Activated CD4-positive, alpha-beta T cell treated with anti-CD3 and anti-CD28 coated beads, Interleukin-2, amount 10 ng/mL, durations not matched to agents 24 days and 14 days (primary cell): ENCODE measurements at regions of chr3 and their contacts with region 1.

Region 1: DNA sequence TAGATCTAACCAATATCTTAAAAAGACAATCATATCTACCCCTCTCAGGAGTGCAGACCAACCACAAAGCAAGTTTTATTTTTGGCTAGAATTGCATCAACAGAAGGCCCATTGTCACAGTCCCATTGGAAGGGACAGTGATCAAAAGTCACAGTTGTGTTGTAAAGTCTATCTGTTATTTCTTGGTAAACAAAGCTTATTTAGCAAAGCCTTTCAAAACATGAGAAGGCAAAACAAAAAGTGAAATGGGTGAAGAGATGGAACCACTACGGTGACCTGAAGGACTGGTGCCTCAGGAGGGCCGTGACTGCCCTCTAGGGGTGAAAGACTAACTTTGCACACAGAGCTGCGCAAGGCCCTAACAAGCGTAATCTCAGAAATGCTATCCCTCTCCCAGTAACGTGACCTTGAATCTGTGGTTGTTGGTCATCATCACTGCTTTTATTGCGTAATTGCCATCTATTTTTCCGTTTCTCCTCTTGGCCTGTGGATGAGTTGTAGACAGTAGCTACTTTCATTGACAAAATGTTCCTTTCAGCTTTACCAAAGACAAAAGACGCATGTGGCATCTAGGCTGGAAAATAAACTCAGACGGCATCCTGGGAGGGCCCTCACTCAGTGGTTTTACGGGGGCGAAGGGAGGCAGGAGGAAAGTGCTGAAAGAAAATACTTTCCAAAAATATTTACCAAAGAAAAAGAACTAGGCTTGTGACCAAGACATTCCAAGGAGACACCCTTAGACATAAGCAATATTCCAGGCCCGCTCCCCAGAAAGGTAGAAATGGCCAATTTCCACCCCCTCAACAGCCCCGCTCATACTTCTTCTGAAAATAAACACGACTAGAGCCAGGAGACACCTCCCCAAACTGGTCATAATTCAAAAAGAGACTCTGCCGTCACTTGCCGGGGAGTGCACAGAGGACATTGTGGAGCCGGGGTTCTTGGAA is 79.4 kb downstream of the FRMD4B start:
- DNase-seq: peak; percentile 91
- H3K4me3 Mint-ChIP-seq: peak overlapping the region; percentile 62
- H3K27ac Mint-ChIP-seq: peak overlapping the region; percentile 66
- H3K4me1 Mint-ChIP-seq: peaks cover 19% of the 10 kb centered on the region
- H3K27me3 Mint-ChIP-seq: no peaks in the 10 kb centered on the region

Region 2: DNA sequence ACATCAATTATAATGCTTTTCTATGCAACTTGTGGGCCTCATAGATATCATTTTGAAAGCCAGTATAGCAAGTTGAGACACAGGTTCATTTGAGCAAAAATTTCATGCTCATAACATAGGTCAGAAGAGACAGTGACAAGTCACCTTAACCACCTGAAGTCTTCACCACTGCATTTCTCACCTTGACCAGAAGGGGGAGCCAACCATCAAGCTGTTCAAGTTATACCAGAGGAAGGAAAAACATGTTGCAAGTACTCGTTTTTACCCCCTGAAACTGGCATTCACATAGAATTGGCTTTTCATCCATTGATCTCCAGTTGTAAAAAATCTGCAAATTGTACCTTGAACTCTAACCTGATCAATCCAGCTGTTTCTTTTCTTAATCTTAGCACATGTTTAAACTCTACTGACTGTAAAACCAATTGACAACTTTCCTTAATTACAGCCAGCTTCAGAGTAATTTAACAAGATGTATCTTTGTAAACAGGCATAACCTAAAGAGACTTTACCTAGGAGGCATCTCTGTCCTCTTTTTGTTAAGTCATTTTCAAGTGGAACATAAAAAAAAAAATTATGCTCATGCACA is 185.5 kb before region 1 on chr3:
- intact Hi-C with region 1: loop called (anchors 1 kb)
- DNase-seq: peak; percentile 94
- H3K4me3 Mint-ChIP-seq: no peak overlapping the region
- H3K27ac Mint-ChIP-seq: no peak overlapping the region
- H3K4me1 Mint-ChIP-seq: peaks cover 4% of the 10 kb centered on the region
- H3K27me3 Mint-ChIP-seq: peaks cover 5% of the 10 kb centered on the region

Region 3: DNA sequence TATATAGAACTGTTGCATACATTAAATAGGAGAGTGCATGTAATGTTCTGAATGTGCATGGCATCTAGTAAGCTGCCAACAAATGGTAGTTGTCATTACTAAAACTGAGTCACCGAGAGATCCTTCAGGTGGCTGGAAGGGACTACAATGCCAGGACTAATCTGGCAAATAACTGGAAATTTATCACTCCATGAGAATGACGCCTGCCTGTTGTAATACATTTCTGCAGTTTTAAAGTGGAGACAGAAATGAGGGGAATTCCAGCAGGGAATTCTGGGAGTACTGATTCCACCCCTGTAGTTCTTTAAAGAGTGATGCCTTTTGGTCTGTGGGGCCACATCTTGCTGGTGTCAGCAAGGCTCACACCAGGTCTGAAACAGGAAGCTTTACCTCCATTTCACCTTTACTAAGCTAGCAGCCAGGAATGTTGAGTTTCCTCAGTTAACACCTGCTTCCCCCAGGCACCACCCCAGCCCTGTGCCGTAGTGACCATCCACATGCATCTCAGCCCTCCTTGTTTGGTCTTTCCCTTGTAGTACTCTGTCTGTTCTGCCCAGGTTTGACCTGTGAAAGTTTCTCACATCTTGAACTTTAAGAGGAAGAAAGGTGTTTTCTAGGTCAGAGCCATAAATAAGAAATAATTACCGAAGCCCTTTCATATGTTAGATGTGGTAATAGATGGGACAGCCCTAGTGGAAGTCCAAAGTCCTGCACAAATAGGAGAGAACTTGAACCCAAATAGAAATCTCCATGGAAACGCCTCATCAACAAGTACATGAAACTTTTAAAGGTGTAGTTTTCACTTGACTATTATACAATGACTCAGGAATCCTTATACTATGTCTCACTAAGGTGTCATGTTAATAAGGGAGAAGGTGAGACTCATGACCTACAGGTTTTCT is 127.4 kb before region 1 on chr3:
- intact Hi-C with region 1: loop called (anchors 5 kb)
- DNase-seq: no peak
- H3K4me3 Mint-ChIP-seq: no peak overlapping the region
- H3K27ac Mint-ChIP-seq: peak overlapping the region; percentile 47
- H3K4me1 Mint-ChIP-seq: peaks cover 21% of the 10 kb centered on the region
- H3K27me3 Mint-ChIP-seq: no peaks in the 10 kb centered on the region

Region 4: GRCh38 chr3:69212411-69213139 is 93.9 kb before region 1 on chr3:
- intact Hi-C with region 1: loop called (anchors 1 kb)
- DNase-seq: peak; percentile 71
- H3K4me3 Mint-ChIP-seq: peak overlapping the region; percentile 62
- H3K27ac Mint-ChIP-seq: peak overlapping the region; percentile 90
- H3K4me1 Mint-ChIP-seq: peaks cover 50% of the 10 kb centered on the region
- H3K27me3 Mint-ChIP-seq: no peaks in the 10 kb centered on the region

Region 5: DNA sequence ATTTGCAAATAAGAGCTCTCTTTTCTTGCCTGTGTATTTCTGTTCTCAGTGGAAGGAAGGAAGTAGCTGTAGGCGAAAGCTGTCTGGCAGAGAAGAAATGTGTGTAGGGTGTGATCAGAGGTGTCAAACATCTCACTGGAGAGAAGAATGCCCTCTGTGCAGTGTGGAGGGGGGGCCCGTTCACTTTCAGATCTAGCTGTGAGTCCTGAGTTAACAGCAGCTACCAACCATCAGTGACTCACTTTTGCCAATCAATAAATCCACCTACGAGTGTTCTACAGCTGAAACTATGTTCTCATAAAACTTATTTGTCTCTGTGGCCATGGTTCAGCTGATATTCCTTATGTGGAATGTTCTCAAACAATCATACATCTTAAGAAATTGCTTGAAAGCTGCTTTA is 24.3 kb before region 1 on chr3:
- intact Hi-C with region 1: loop called (anchors 1 kb)
- DNase-seq: peak; percentile 69
- H3K4me3 Mint-ChIP-seq: peak overlapping the region; percentile 50
- H3K27ac Mint-ChIP-seq: peak overlapping the region; percentile 87
- H3K4me1 Mint-ChIP-seq: peaks cover 18% of the 10 kb centered on the region
- H3K27me3 Mint-ChIP-seq: peaks cover under 1% of the 10 kb centered on the region

Region 6: DNA sequence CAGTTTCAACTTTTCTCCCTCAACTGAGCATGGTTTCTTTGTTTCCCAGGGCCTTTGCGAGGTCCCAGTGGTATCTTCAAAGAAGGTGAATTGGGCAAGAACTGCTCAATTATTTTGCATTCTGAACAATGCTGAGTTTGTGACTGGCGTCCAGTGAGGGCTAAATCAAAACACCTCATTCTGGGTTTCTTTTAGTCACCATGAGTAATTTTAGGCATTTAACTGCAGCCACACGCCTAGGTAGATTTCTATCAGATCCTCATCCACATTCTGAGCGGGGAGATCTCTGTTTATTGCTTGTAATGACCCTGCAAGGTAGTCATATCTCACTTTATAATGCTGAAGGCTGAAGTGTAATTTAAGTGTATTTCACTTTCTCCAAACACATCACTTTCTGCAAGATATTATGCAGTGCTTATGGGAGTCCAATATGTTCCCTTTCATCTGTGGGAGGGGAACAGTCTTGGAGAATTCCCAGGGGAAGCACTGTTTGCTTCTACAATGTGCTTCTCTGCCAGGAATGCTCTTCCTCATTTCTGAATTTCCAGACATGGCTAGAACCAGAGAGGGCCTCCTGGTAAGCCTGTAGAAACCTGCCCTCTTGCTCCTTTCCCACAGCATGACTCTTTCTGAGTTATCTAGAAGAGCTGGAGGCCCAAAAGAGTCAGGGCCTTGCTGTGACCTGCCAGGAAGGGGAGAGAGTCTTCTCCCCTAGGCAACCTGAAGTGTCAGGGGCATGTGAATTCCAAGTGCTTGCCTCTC is 12.3 kb before region 1 on chr3:
- intact Hi-C with region 1: loop called (anchors 1 kb)
- DNase-seq: no peak
- H3K4me3 Mint-ChIP-seq: no peak overlapping the region
- H3K27ac Mint-ChIP-seq: no peak overlapping the region
- H3K4me1 Mint-ChIP-seq: peaks cover 5% of the 10 kb centered on the region
- H3K27me3 Mint-ChIP-seq: no peaks in the 10 kb centered on the region

Region 7: GRCh38 chr3:69320871-69321271 is 14.4 kb after region 1 on chr3:
- intact Hi-C with region 1: no loop called
- DNase-seq: no peak
- H3K4me3 Mint-ChIP-seq: no peak overlapping the region
- H3K27ac Mint-ChIP-seq: no peak overlapping the region
- H3K4me1 Mint-ChIP-seq: peaks cover 30% of the 10 kb centered on the region
- H3K27me3 Mint-ChIP-seq: no peaks in the 10 kb centered on the region

Region 8: DNA sequence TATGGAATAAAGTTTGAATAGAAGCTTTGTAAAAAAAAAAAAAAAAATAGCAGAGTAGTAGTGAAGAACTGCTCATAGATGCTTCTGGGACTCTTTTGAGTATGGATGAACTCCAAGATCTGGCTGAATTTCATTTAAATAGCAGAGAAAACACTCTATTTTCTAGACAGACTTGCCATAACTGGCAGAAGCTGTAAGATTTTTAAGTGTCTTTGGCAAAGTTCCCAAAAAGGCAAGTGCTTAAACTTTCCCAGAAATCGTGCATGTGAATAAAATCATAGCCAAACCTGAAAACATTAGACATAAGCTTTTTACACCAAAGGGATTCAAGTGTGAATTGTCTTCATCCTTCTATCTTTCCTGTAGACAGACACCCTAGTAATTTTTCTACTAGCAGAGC is 322.4 kb after region 1 on chr3:
- intact Hi-C with region 1: no loop called
- DNase-seq: no peak
- H3K4me3 Mint-ChIP-seq: no peak overlapping the region
- H3K27ac Mint-ChIP-seq: no peak overlapping the region
- H3K4me1 Mint-ChIP-seq: no peaks in the 10 kb centered on the region
- H3K27me3 Mint-ChIP-seq: no peaks in the 10 kb centered on the region